WTC11 (cell line): ENCODE measurements at regions of chr14 and their contacts with region 1.

Region 1: DNA sequence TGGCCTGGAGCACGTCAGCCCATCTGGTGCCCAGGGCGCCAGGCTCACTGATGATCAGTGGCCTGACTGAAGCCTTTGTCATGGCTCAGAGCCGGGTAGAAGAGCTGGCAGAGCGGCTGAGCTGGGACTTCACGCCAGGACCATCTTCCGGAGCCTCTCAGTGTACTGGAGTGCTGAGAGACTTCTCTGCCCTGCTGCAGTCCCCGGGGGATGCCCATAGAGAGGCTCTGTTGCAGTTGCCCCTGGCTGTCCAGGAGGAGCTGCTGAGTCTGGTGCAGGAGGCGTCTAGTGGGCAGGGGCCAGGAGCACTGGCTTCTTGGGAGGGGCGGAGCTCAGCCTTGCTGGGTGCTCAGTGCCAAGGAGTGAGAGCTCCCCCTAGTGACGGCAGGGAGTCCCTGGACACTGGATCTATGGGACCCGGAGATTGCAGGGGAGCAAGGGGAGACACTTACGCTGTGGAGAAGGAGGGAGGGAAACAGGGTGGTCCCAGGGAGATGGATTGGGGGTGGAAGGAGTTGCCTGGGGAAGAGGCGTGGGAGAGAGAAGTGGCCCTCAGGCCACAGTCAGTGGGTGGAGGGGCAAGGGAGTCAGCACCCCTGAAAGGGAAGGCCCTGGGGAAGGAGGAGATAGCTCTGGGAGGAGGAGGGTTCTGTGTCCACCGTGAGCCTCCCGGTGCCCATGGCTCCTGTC is 2.0 kb downstream of the KHNYN start:
- DNase-seq: peak; percentile 96
- ATAC-seq: peak; percentile 84
- H3K4me3 Mint-ChIP-seq: peak overlapping the region; percentile 74
- H3K27ac Mint-ChIP-seq: peak overlapping the region; percentile 48
- H3K4me1 Mint-ChIP-seq: peaks cover 29% of the 10 kb centered on the region
- H3K27me3 Mint-ChIP-seq: peaks cover 14% of the 10 kb centered on the region
- CTCF ChIP-seq: peak; percentile 89

Region 2: DNA sequence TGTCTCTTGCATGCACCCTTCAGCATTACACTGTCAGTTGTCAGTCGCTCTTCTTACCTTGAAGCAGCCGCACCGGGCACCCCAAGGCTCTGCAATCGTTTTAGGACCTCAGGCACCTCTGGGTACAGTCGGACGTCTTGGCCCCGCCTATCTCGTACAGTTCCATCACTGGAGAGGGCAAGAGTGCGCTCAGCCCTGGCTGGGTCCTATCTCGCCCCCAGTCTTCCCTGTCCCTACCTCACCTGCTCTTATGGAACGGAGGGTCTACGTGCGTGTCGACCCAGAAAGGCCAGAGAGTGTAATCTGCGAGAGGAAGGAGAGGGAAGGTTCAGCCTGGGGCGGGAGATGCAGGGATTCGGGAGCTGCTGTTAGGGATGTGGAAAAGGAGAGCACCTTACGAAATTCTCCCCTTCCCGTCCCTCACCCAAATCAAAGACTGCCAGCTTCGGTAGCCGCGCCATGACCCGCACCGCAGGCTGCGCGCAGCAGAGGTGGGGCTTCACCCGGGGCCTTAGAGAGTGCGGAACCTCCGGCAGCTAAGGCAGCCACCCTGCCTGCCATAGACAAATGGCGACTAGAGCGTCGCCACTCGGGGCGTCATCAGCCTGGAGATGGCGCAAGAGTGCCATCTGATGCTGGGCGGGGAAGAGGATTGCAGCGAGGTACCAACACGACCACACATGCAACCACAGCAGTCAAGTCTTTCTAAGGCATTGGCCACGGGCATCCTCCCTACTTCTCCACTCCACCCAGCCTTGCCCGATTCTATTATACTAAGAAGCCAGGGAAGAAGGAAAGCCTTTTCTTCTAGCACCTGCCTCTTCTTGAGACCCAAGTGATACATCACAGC is 216.0 kb before region 1 on chr14 and contains the start of gene MDP1:
- CTCF ChIA-PET with region 1: interaction called, 12 read pairs
- POLR2A ChIA-PET with region 1: no interaction called
- DNase-seq: peak; percentile 85
- ATAC-seq: peak; percentile 71
- H3K4me3 Mint-ChIP-seq: peak within 1 kb of the TSS; percentile 96
- H3K27ac Mint-ChIP-seq: peak within 1 kb of the TSS; percentile 97
- H3K4me1 Mint-ChIP-seq: peaks cover 23% of the 10 kb centered on the region
- H3K27me3 Mint-ChIP-seq: no peaks in the 10 kb centered on the region; the same call in 1 of the 2 replicates
- CTCF ChIP-seq: no peak
- total RNA-seq, gene MDP1: 12.6 to 18.4 TPM (median 16.9 TPM) in 3 replicates

Region 3: DNA sequence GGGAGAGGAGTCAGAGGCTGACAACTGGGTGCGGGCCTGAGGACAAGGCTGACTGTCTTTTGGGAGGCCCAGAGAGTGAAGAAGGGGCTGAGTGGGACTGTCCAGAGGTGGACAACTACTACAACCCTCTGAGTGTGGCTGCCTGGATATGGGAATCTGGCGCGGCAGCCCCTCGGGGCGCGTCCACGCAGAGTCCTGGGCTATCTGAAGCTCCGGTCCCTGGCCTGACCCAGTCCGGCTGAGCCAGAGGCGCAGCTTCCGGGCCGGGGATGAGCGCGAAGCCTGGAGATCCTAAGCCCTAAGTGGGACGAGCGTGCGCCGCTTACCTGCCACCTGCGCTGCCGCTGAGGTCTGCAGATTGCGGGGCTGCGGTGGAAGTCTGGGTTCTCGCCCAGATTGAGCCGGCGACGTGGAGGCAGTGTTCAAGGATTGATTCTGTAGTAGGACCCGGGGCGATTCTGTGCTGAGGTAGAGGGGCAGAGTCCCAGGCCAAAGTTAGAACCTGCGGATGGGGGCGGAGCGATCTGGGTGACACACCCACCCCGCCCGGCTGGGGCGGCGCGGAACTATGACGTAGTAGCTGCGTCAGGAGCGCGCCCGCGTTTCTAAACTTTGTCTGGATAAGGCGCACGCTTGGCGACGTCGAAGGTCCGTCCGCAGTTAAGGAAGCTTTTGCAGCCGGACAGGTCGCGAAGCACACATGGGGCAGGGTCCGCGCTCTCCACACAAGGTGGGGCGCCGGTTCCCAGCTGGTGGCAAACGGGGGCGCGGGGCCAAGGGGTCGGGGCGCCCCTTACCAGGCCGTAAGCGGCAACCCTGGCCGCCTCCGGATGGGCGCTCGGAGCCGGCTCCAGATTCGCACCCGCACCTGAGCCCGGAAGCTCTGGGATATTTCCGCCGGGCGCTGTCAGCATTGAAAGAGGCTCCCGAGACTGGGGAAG is 132.2 kb before region 1 on chr14 and contains the starts of genes DHRS1 and NOP9:
- CTCF ChIA-PET with region 1: interaction called, 20 read pairs
- POLR2A ChIA-PET with region 1: interaction called, 4 read pairs
- DNase-seq: peak; percentile 94
- ATAC-seq: peak; percentile 83
- H3K4me3 Mint-ChIP-seq: peak within 1 kb of the TSS; percentile 91
- H3K27ac Mint-ChIP-seq: peak within 1 kb of the TSS; percentile 89
- H3K4me1 Mint-ChIP-seq: peaks cover 19% of the 10 kb centered on the region
- H3K27me3 Mint-ChIP-seq: 0 out of 2 replicates have a peak, but pooled peaks cover 3% of the 10 kb centered on the region
- CTCF ChIP-seq: no peak
- total RNA-seq, gene DHRS1: 13.9 to 16.7 TPM (median 15.4 TPM) in 3 replicates
- total RNA-seq, gene NOP9: 34.3 to 44.4 TPM (median 35.0 TPM) in 3 replicates

Region 4: DNA sequence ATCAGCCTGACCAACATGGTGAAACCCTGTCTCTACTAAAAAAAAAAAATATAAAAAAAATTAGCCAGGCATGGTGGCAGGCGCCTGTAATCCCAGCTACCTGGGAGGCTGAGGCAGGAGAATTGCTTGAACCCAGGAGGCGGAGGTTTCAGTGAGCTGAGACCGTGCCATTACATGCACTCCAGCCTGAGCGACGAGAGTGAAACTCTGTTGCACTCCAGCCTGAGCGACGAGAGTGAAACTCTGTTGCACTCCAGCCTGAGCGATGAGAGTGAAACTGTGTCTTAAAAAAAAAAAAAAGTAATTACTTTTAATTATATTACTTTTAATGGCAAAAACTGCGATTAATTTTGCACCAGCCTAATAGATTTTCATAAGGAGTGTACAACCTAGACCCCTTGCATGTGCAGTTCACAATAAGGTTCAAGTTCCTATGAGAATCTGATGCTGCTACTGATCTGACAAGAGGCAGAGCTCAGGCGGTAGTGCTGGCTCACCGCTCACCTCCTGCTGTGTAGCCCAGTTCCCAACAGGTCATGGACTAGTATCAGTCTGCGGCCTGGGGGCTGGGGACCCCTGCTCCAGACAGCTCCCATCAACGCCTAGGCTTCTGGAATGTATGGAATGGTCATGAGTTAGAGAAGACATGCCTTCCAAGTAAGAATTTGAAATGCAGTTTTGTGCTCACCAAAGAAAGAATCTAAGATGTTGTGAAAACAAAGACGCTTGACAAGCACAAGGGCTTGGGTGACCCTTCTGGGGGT is 110.3 kb before region 1 on chr14:
- CTCF ChIA-PET with region 1: interaction called, 518 read pairs
- POLR2A ChIA-PET with region 1: interaction called, 3 read pairs
- DNase-seq: peak; percentile 42
- ATAC-seq: no peak
- H3K4me3 Mint-ChIP-seq: no peak overlapping the region
- H3K27ac Mint-ChIP-seq: no peak overlapping the region
- H3K4me1 Mint-ChIP-seq: no peaks in the 10 kb centered on the region; the same call in 1 of the 2 replicates
- H3K27me3 Mint-ChIP-seq: peaks cover 80% of the 10 kb centered on the region
- CTCF ChIP-seq: no peak

Region 5: GRCh38 chr14:24339284-24340151 is 92.2 kb before region 1 on chr14 and contains the start of gene RIPK3:
- CTCF ChIA-PET with region 1: interaction called, 518 read pairs
- POLR2A ChIA-PET with region 1: no interaction called
- DNase-seq: peak; percentile 68
- ATAC-seq: peak; percentile 69
- H3K4me3 Mint-ChIP-seq: peak within 1 kb of the TSS; percentile 80
- H3K27ac Mint-ChIP-seq: no peak within 1 kb of the TSS
- H3K4me1 Mint-ChIP-seq: peaks cover 13% of the 10 kb centered on the region
- H3K27me3 Mint-ChIP-seq: peaks cover 95% of the 10 kb centered on the region
- CTCF ChIP-seq: no peak
- total RNA-seq, gene RIPK3: 0.37 to 1.2 TPM (median 0.83 TPM) in 3 replicates

Region 6: DNA sequence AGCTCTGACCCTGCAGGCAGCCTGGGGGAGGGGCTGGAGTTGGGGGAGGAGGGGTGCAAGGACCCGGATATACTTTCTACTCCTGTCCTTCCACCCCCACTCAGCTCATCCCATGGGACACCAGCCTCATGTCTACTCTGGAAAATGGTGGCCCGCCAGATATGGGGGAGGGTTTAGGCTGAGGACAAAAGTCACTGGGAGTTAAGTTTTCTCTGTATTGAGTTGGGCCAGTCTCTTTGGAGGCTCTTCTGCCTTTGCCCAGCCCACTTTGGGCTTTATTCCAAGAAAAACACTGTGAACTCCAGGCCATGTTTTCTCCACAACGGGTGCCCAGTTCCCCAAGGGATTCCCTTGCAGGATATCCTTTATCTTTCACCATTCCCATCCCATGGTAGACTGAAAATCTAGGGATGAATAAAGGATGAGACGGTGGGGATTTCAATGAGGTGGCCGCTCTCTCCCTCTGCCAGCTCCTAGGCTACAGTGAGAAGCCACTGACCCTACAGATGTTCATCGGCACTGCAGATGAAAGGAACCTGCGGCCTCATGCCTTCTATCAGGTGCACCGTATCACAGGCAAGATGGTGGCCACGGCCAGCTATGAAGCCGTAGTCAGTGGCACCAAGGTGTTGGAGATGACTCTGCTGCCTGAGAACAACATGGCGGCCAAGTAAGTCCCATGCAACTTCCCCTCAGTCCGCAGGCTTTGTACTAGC is 58.9 kb before region 1 on chr14:
- CTCF ChIA-PET with region 1: interaction called, 55 read pairs
- POLR2A ChIA-PET with region 1: interaction called, 6 read pairs
- DNase-seq: no peak
- ATAC-seq: no peak
- H3K4me3 Mint-ChIP-seq: no peak overlapping the region
- H3K27ac Mint-ChIP-seq: no peak overlapping the region
- H3K4me1 Mint-ChIP-seq: peaks cover 32% of the 10 kb centered on the region
- H3K27me3 Mint-ChIP-seq: no peaks in the 10 kb centered on the region
- CTCF ChIP-seq: no peak

Region 7: DNA sequence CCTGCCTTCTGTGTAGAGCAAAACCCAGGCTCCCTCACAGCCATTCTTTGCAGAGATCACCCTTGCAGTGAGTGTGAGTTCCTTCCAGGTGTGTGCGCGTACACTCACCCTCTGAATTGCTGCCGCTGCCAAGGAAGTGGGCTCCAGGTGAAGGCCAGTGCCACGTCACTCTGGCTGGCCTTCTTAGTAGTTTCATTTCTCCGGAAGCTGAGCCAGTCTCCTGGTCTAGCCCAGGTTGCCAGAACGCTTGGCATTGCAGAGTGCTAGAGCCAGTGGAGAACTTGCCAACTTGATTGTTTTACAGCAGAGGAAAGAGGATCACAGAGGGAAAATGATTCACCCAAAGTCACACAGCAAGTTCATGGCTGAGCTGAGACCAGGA is 13.2 kb before region 1 on chr14:
- CTCF ChIA-PET with region 1: interaction called, 40 read pairs
- POLR2A ChIA-PET with region 1: interaction called, 3 read pairs
- DNase-seq: no peak
- ATAC-seq: no peak
- H3K4me3 Mint-ChIP-seq: no peak overlapping the region
- H3K27ac Mint-ChIP-seq: no peak overlapping the region
- H3K4me1 Mint-ChIP-seq: no peaks in the 10 kb centered on the region
- H3K27me3 Mint-ChIP-seq: peaks cover 30% of the 10 kb centered on the region
- CTCF ChIP-seq: no peak

Region 8: DNA sequence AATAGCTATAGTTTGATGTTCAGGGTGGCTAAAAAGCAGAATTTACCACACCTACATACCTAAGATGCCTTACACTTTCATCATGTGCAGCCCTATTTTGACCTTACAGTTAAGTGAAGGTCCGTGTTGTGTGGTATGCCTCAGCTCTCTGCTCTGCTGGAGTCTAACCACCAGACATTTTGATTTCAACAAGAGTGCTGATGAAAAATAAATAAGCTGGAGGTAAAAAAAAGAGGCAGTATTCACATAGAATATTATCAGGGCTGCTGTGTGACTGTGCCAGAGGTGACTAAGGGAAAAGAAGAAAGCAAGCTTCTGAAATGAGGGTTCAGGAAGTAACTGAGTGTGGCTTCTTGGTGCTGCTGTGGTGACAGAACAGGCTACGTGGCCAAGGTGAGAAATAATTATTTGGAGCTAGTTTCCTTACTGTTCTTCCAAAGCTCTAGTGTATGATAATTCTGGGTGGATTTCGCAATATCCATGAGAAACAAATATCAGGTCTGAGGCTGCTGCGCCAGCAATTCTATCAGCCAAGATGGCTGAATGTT is 429.4 kb after region 1 on chr14:
- CTCF ChIA-PET with region 1: no interaction called
- POLR2A ChIA-PET with region 1: no interaction called
- DNase-seq: no peak
- ATAC-seq: no peak
- H3K4me3 Mint-ChIP-seq: no peak overlapping the region
- H3K27ac Mint-ChIP-seq: no peak overlapping the region
- H3K4me1 Mint-ChIP-seq: peaks cover 32% of the 10 kb centered on the region
- H3K27me3 Mint-ChIP-seq: no peaks in the 10 kb centered on the region
- CTCF ChIP-seq: no peak